Activated naive CD8-positive, alpha-beta T cell treated with anti-CD3 and anti-CD28 coated beads, Interleukin-2, amount 10 ng/mL, durations not matched to agents 7 days and 5 days (primary cell): ENCODE measurements at regions of chr18 and their contacts with region 1.

Region 1: DNA sequence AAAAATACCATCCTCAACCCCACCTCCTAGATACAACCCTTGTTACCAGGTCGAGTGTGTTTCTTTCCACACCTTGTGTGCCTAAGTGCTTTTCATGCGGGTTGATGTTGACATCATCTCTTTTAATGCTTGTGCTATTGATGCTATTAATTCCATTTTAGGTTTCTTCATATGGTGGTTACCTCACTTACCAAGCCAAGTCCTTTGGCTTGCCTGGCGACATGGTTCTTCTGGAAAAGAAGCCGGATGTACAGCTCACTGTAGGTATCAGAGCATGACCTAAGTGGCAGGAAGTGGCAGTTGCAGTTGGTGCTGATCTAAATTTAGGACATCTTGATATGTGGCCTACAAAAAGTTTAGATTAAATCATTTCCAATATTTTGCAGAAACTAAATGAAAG is 149.9 kb upstream of the TTC39C start:
- DNase-seq: no peak
- ATAC-seq: peak; percentile 91
- H3K4me3 Mint-ChIP-seq: peak overlapping the region; percentile 47
- H3K27ac Mint-ChIP-seq: peak overlapping the region; percentile 90
- H3K4me1 Mint-ChIP-seq: peaks cover 61% of the 10 kb centered on the region
- H3K27me3 Mint-ChIP-seq: no peaks in the 10 kb centered on the region

Region 2: GRCh38 chr18:23735021-23735464 is 129.6 kb before region 1 on chr18:
- POLR2A ChIA-PET with region 1: no interaction called
- DNase-seq: no peak
- ATAC-seq: no peak
- H3K4me3 Mint-ChIP-seq: no peak overlapping the region
- H3K27ac Mint-ChIP-seq: no peak overlapping the region
- H3K4me1 Mint-ChIP-seq: peaks cover 17% of the 10 kb centered on the region
- H3K27me3 Mint-ChIP-seq: peaks cover 40% of the 10 kb centered on the region

Region 3: GRCh38 chr18:23828426-23828825 is 36.2 kb before region 1 on chr18:
- POLR2A ChIA-PET with region 1: interaction called, 12 read pairs
- DNase-seq: no peak
- ATAC-seq: peak; percentile 98
- H3K4me3 Mint-ChIP-seq: peak overlapping the region; percentile 33
- H3K27ac Mint-ChIP-seq: peak overlapping the region; percentile 73
- H3K4me1 Mint-ChIP-seq: peaks cover 28% of the 10 kb centered on the region
- H3K27me3 Mint-ChIP-seq: peaks cover 2% of the 10 kb centered on the region